ENCODE measurements at regions of chr4 and their contacts with region 1.

Region 1: GRCh38 chr4:74675673-74676279 is 118.5 kb downstream of the BTC start:
- DNase-seq: peak; percentile 60
- H3K4me3 ChIP-seq: no peak overlapping the region
- H3K27ac ChIP-seq: no peak overlapping the region
- H3K4me1 ChIP-seq: peaks cover 2% of the 10 kb centered on the region
- H3K27me3 ChIP-seq: no peaks in the 10 kb centered on the region
- CTCF ChIP-seq: peak; percentile 89

Region 2: GRCh38 chr4:74228691-74229640 is 446.8 kb before region 1 on chr4:
- CTCF ChIA-PET with region 1: no interaction called
- dilution Hi-C with region 1: no loop called
- in situ Hi-C with region 1: no loop called
- intact Hi-C with region 1: loop called (anchors 5 kb)
- DNase-seq: peak; percentile 68
- H3K4me3 ChIP-seq: no peak overlapping the region
- H3K27ac ChIP-seq: no peak overlapping the region
- H3K4me1 ChIP-seq: peaks cover 15% of the 10 kb centered on the region
- H3K27me3 ChIP-seq: no peaks in the 10 kb centered on the region
- CTCF ChIP-seq: peak; percentile 84 to 88

Region 3: DNA sequence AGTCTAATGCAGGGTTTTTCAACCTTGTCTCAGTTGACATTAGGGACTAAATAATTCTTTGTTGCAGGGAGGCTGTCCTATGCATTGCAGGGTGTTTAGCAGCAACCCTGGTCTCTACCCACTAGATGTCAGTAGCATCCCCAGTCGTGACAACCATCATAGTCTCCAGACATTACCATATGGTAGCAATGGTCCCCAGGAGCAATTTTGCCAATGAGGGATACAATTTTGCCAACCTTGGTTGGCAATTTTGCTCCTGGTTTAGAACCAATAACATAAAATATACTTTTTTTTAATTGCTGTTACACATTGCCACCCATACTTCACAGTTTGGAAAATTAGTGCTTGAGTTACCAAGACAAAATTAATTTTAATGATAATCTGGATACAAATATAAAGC is 304.9 kb before region 1 on chr4:
- CTCF ChIA-PET with region 1: no interaction called
- dilution Hi-C with region 1: loop called (anchors 25 kb)
- in situ Hi-C with region 1: loop called in 1 of 2 experiments (anchors 5 kb)
- intact Hi-C with region 1: loop called (anchors 1 kb)
- DNase-seq: peak; percentile 58
- H3K4me3 ChIP-seq: no peak overlapping the region
- H3K27ac ChIP-seq: peak overlapping the region; percentile 57
- H3K4me1 ChIP-seq: peaks cover 37% of the 10 kb centered on the region
- H3K27me3 ChIP-seq: no peaks in the 10 kb centered on the region
- CTCF ChIP-seq: peak; percentile 90 to 96

Region 4: GRCh38 chr4:74451200-74451661 is 224.5 kb before region 1 on chr4:
- CTCF ChIA-PET with region 1: no interaction called
- dilution Hi-C with region 1: no loop called
- in situ Hi-C with region 1: loop called (anchors 5 to 10 kb)
- intact Hi-C with region 1: no loop called
- DNase-seq: peak; percentile 63
- H3K4me3 ChIP-seq: peak overlapping the region; percentile 83 to 93 (median 93)
- H3K27ac ChIP-seq: peak overlapping the region; percentile 99
- H3K4me1 ChIP-seq: peaks cover 11% of the 10 kb centered on the region
- H3K27me3 ChIP-seq: no peaks in the 10 kb centered on the region
- CTCF ChIP-seq: no peak

Region 5: GRCh38 chr4:74466242-74466641 is 209.5 kb before region 1 on chr4:
- CTCF ChIA-PET with region 1: no interaction called
- dilution Hi-C with region 1: no loop called
- in situ Hi-C with region 1: no loop called
- intact Hi-C with region 1: no loop called
- DNase-seq: no peak
- H3K4me3 ChIP-seq: no peak overlapping the region
- H3K27ac ChIP-seq: no peak overlapping the region
- H3K4me1 ChIP-seq: peaks cover 6% of the 10 kb centered on the region
- H3K27me3 ChIP-seq: no peaks in the 10 kb centered on the region
- CTCF ChIP-seq: no peak

Region 6: DNA sequence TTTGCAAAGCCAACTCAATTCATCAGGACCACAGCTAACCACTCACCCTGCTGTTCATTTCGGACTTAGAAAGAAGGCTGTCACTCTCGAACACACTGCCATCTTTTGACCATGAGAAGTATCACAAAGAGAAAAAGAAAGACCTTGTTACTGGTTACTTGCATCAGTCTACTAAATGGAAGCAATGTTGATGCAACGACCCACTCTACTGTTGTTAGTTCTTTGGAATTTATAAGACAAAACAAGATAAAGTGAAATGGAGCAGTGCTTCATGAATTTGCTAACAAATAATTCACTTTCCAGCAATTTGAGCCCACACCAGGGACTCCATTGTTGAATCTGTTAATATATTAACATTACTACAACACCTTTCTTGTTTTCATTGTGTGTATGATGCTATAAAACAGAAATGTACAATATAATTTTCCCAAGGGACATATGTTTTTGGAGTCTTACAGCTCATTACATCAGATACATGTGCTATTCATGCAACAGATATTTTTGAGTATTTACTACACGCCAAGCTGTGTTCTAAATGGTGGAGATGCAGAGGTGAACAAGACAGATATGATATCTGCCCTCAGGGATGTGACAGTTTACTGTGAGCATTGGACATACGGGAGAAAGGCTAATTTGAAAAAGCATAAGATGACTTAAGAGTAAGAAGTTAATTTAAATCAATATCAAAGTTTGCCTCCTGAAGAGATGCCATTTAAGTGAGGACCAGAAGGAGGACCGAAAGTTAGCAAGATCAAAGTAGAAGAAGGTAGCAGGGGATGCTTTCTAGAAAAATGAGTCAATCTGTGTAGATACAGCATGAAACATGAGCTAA is 143.6 kb before region 1 on chr4:
- CTCF ChIA-PET with region 1: no interaction called
- dilution Hi-C with region 1: no loop called
- in situ Hi-C with region 1: loop called in 1 of 2 experiments (anchors 5 kb)
- intact Hi-C with region 1: loop called (anchors 1 kb)
- DNase-seq: peak; percentile 78
- H3K4me3 ChIP-seq: no peak overlapping the region
- H3K27ac ChIP-seq: peak overlapping the region; percentile 43
- H3K4me1 ChIP-seq: peaks cover 13% of the 10 kb centered on the region
- H3K27me3 ChIP-seq: no peaks in the 10 kb centered on the region
- CTCF ChIP-seq: peak; percentile 73 to 85

Region 7: DNA sequence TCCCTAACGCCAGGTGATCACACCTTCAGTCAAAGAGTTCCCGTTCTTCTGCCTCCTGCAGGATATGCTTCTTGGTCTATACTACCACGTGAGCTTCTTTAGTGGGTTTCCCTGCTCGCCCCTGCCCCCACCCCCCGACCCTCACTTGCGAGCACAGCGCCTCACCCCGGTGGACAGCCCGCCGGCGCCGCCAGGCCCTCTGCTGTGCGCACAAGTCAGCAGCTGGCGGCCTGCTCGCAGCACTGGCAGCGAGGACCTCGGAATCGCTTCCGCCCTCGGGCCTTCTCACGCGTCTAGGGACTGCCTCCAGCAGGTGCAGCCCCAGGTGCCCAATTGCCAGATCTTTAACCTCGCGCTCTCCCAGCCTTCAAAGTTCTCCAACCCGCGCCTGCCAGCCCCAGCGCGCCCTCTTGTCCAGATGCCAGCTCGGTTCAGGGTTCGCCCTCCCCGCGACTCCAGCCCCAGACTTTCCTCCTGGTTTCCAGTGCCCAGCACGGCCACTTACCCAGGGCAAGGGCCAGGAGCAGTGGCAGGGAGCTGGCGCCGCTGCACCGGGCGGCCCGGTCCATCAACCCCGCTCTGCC is 118.1 kb after region 1 on chr4:
- CTCF ChIA-PET with region 1: no interaction called
- dilution Hi-C with region 1: no loop called
- in situ Hi-C with region 1: no loop called
- intact Hi-C with region 1: no loop called
- DNase-seq: peak; percentile 44
- H3K4me3 ChIP-seq: peak overlapping the region; percentile 68 to 84 (median 71)
- H3K27ac ChIP-seq: peak overlapping the region; percentile 37
- H3K4me1 ChIP-seq: peaks cover 12% of the 10 kb centered on the region
- H3K27me3 ChIP-seq: no peaks in the 10 kb centered on the region
- CTCF ChIP-seq: peak; percentile 24 to 59

Region 8: DNA sequence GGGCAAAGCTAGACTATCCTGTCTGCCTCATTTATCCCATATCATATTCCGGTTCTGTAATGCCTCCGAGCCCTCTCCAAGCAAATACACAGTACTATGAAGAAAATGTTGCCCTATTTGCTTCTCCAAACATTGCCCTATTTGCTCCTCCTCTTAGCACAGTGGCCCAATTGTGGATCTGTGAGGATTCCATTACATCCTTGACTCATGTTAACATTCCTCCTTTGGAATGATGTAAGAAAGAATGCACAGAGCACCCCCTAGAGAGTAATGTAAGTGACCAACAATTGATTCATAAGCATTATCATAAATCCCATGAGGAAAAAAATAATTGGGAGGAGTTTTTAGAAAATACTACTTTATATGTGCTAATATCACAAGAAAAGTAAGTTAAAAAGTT is 129.8 kb after region 1 on chr4:
- CTCF ChIA-PET with region 1: no interaction called
- dilution Hi-C with region 1: no loop called
- in situ Hi-C with region 1: no loop called
- intact Hi-C with region 1: loop called (anchors 5 kb)
- DNase-seq: peak; percentile 52
- H3K4me3 ChIP-seq: no peak overlapping the region
- H3K27ac ChIP-seq: no peak overlapping the region
- H3K4me1 ChIP-seq: no peaks in the 10 kb centered on the region
- H3K27me3 ChIP-seq: no peaks in the 10 kb centered on the region
- CTCF ChIP-seq: peak; percentile 6 to 30

Measured in mammary epithelial cell (primary cell).